AG04450 (cell line): ENCODE measurements at regions of chr1 and their contacts with region 1.

Region 1: DNA sequence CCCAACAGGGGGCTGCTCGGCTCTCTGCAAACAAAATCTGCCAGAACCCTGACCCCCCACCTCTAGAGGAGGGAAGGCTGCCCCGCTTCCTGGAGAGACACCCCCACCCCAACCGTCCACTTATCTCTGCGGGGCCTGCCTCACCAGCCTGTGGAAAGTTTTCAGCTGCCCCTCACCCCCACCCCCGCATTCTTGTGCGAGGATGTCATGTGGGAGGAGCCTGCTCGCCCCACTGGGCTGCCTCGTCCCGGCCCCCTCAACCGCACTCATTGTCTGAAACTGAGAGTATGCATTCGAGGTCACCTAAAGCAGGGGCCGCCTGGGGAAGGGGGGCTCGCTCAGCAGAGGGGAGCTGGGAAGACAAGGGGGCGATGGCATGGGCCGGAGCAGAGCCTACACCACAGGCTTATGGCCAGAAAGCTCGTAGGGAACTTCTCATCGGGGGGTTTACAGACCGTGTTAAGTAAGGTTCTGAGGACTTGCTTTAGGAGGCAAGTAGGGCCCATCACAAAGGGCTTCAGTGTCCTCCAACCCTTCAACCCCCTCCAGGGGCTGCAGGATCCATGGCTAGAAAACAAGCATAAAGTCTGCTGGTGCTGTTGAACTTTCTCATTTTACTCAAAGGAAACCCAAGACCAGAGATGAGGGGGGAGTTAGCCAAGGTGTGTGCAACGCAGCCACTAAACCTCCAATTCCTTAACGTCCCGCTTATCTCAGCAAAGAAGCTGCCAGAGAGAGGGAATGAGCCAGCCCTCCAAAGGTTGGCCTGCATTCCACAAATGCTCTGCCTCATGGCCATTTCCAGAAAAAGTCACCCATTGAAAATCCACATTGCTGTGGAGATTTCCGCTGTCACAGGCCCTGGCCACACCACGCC is 9.4 kb downstream of the EPHA2 start:
- DNase-seq: peak; percentile 80
- H3K4me3 ChIP-seq: peak overlapping the region; percentile 55
- H3K27ac ChIP-seq: peak overlapping the region; percentile 97
- H3K27me3 ChIP-seq: no peaks in the 10 kb centered on the region
- CTCF ChIP-seq: no peak

Region 2: DNA sequence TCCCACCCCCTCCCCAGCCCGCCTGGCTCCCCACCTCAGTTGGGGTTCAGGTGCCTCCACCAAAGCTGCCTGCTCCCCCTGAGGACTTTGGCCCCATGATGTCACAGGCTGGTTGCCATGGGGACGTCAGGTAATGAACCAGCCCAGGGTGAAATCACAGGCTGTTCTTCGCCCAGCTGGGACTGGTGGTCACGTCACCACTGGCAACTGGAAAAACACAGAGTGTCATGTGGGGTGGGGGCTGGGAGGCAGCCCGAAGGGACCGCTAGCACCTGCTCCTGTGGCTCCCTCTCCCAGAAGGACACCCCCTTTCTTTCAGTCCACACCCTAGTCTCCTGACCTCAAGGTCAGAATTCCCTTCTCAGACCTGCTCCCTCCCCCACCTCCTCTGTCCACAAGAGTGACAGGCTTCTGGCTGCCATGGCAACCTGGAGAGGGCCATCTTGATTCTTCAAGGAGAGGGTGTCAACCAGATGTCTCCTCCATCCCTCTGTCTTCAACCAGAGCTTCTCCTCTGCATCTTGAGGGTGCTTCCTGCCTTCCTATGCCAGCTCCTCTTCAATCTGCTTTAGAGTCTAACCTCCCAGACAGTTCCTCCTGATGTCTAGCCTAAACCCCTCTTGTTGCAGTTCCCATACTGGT is 79.3 kb before region 1 on chr1:
- CTCF ChIA-PET with region 1: no interaction called
- POLR2A ChIA-PET with region 1: no interaction called
- DNase-seq: no peak
- H3K4me3 ChIP-seq: no peak overlapping the region
- H3K27ac ChIP-seq: no peak overlapping the region
- H3K27me3 ChIP-seq: peaks cover 22% of the 10 kb centered on the region
- CTCF ChIP-seq: no peak

Region 3: GRCh38 chr1:16167331-16168143 is 21.0 kb after region 1 on chr1:
- CTCF ChIA-PET with region 1: interaction called, 3 read pairs
- POLR2A ChIA-PET with region 1: interaction called, 17 read pairs
- DNase-seq: no peak
- H3K4me3 ChIP-seq: peak overlapping the region; percentile 53
- H3K27ac ChIP-seq: no peak overlapping the region
- H3K27me3 ChIP-seq: no peaks in the 10 kb centered on the region
- CTCF ChIP-seq: no peak

Region 4: DNA sequence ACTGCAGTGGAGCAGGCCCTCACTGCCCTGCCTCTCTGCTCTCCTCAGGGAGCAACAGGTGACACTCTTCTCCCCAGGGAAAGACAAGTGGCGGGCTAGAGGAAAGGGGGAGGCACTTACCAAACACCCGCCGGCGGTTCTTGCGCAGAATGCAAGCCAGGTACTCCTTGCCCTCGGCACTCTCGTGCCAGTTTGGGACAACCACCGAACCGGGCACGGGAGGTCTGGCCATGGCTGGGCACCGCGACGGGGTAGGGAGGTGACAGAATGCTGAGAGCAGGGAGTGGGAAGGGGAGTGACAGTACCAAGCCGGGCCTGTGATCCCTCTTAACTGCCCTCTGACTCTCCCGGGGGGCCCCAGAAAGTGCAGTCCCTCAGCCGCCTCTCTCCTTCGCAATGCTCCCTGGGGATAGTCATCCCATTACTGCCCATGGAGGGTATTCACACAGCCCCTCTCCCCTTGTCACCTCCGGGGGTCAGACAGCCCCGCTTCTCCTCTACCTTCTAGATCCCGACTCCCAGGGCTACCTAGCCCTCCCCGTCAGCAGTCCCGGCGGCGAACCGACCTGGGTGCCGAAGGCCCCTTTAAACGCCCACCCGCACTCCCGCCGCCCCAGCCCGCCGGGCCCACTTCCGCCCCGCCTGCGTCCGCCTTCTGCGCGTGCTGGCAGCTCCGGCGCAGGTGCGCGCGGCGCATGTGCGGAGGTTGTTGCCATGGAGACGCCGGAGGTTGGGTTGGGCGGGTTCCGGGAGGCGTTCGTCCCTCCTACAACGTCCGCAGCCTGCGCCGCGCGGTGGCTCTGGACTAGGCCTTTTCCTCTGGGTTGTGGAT is 90.2 kb after region 1 on chr1 and contains the start of gene CPLANE2:
- CTCF ChIA-PET with region 1: no interaction called
- POLR2A ChIA-PET with region 1: interaction called, 12 read pairs
- DNase-seq: peak; percentile 74
- H3K4me3 ChIP-seq: peak within 1 kb of the TSS; percentile 77
- H3K27ac ChIP-seq: peak within 1 kb of the TSS; percentile 78
- H3K27me3 ChIP-seq: no peaks in the 10 kb centered on the region
- CTCF ChIP-seq: no peak
- polyA plus RNA-seq, gene CPLANE2: 3.6 and 5.7 TPM in 2 replicates

Region 5: DNA sequence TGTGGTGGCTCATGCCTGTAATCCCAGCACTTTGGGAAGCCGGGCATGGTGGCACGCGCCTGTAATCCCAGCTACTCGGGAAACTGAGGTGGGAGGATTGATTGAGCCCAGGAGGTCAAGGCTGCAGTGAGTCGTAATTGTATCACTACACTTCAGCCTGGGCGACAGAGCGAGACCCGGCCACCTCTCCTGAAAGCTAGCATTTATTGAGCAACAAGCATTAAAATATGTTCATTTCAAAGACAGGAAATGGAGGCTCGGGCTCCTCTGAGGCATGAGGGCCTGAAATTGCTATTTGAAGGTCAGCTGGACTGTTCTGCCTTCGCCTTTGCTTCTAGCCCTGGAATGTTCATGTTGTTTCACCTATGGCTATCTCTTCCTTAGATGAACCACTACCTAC is 256.2 kb after region 1 on chr1:
- CTCF ChIA-PET with region 1: no interaction called
- POLR2A ChIA-PET with region 1: no interaction called
- DNase-seq: no peak
- H3K4me3 ChIP-seq: no peak overlapping the region
- H3K27ac ChIP-seq: peak overlapping the region; percentile 31
- H3K27me3 ChIP-seq: no peaks in the 10 kb centered on the region
- CTCF ChIP-seq: no peak

Region 6: DNA sequence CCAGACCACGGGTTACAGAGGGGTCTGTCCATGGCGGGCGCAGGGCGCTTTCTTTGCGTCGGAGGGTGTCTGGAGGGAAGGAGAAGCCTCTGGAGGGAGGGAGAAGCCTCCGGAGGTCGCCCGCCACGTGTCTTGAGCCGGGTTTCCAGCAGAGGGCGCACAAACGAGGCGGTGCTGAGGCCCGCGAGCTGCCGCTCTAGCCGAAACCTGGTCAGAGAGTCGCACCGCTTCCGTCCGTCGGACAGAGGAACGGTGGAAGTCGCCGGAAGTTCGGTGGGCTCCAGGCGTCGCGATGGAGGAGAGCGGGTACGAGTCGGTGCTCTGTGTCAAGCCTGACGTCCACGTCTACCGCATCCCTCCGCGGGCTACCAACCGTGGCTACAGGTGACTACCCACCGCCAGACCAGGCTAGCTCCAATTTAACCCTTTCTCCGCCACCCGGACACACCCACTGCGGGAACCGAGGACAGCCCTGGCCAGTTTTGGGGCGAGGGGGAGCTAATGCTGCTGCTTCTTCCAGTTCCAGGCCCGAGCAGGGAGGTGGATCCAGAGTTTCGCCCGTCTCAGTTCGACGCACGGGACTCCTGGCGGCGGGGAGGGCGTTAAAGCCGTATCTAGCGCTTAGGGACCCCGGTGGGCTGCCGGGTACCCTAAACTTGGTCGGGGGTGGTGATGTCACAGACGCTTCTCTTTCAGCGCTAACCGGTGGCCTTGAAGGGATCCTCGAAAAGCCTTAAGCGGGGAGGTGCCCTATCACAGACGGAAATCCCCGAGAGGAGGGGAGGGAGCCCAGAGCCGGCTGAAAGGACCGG is 294.2 kb after region 1 on chr1 and contains the start of gene NECAP2:
- CTCF ChIA-PET with region 1: no interaction called
- POLR2A ChIA-PET with region 1: no interaction called
- DNase-seq: peak; percentile 85
- H3K4me3 ChIP-seq: peak within 1 kb of the TSS; percentile 99
- H3K27ac ChIP-seq: peak within 1 kb of the TSS; percentile 82
- H3K27me3 ChIP-seq: no peaks in the 10 kb centered on the region
- CTCF ChIP-seq: peak; percentile 72
- polyA plus RNA-seq, gene NECAP2: 108 and 111 TPM in 2 replicates